Dorsolateral prefrontal cortex (tissue), 120 donors: ENCODE measurements at regions of chr9 and their contacts with region 1.

Region 1: GRCh38 chr9:71249729-71250317 is 128.4 kb upstream of the TRPM3 start:
- DNase-seq: peak in 2 of 10 donors; percentile 19 to 50
- H3K4me3 ChIP-seq: peak overlapping the region in 27 of 59 donors; percentile 2 to 50 (median 25)
- H3K27ac ChIP-seq: peak overlapping the region in 2 of 59 donors; percentile 19 to 55
- H3K27me3 ChIP-seq: peaks cover 0 to 6% (median 0%) of the 10 kb centered on the region in 45 donors
- CTCF ChIP-seq: peak; percentile 71 to 94 (median 86)

Region 2: DNA sequence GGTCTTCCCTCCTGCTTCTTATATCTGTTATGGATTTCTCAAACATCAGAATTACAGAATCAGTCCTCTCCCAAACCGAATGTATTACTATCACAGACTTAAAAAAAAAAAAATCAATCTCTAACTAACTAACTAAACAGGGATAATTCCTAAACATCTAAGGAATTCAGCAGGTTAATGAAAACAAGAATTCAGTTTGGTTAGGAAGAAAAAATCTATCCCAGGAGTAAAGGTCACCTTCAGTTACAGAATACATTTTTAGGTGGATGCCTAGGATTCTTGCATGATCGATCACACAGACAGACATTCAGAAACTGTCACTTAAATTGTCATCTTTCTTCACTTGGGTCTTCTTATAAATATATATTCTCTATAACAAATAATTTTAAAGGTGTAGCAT is 1501.5 kb before region 1 on chr9:
- intact Hi-C with region 1: no loop called
- DNase-seq: no peak
- H3K4me3 ChIP-seq: no peak overlapping the region
- H3K27ac ChIP-seq: no peak overlapping the region
- H3K27me3 ChIP-seq: no peaks in the 10 kb centered on the region
- CTCF ChIP-seq: no peak

Region 3: DNA sequence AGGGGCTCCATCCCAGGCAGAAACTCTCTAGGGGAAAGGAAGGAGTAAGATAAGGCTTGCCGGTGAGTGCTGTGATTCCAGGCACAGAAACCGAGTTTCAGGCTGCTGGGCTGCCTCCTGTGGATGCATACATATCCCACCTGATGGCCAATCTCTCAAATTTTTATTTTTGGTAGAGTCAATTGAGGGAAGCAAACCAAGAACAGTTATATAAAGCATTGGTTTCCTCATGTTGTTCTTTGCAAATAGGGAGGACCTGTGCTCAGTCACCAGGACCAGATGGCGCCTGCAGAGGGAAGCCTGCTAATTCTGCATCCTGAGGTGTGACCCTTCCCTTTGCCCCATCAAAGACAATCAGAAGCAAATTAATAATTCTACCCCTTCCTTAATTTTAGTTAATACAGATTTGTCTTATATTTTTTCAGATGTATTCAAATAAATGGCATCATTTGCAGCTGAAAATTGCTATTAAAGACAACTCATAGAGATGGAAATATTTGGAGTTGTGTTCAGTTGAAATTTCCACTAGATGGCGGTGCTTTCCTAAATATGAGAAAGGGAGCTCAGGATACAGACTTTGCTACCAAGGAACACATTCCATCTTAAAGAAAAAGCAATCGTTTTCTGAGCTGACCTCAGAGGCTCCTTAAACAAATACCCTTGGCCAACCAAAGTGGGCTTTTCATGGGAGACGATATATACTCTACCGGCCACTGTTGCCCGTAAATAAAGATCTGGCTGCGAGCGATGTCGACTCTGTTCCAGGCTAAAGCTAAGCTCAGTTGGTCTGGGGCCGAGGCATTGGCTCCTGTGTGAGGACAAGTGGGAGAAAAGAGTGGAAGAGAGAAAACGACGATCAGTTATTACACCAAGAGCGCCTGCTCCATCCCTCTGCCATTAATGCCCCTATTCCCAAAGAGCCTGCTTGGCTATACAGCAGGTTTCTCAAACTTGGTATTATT is 609.7 kb before region 1 on chr9:
- intact Hi-C with region 1: loop called (anchors 5 kb)
- DNase-seq: peak in 4 of 10 donors; percentile 6 to 73 (median 40)
- H3K4me3 ChIP-seq: peak overlapping the region in 3 of 59 donors; percentile 4 to 26 (median 25)
- H3K27ac ChIP-seq: peak overlapping the region in 43 of 59 donors; percentile 2 to 92 (median 48)
- H3K27me3 ChIP-seq: no peaks in the 10 kb centered on the region
- CTCF ChIP-seq: peak; percentile 44 to 88 (median 76)

Region 4: GRCh38 chr9:70761139-70761670 is 488.6 kb before region 1 on chr9:
- intact Hi-C with region 1: no loop called
- DNase-seq: no peak
- H3K4me3 ChIP-seq: no peak overlapping the region
- H3K27ac ChIP-seq: no peak overlapping the region
- H3K27me3 ChIP-seq: no peaks in the 10 kb centered on the region
- CTCF ChIP-seq: no peak

Region 5: GRCh38 chr9:70924895-70925547 is 324.8 kb before region 1 on chr9:
- intact Hi-C with region 1: loop called (anchors 5 kb)
- DNase-seq: peak in 3 of 10 donors; percentile 34 to 57 (median 54)
- H3K4me3 ChIP-seq: peak overlapping the region in 41 of 59 donors; percentile 7 to 46 (median 26)
- H3K27ac ChIP-seq: no peak overlapping the region
- H3K27me3 ChIP-seq: no peaks in the 10 kb centered on the region
- CTCF ChIP-seq: peak; percentile 51 to 85 (median 77)